Endothelial cell of umbilical vein (primary cell): ENCODE measurements at regions of chr11 and their contacts with region 1.

Region 1: DNA sequence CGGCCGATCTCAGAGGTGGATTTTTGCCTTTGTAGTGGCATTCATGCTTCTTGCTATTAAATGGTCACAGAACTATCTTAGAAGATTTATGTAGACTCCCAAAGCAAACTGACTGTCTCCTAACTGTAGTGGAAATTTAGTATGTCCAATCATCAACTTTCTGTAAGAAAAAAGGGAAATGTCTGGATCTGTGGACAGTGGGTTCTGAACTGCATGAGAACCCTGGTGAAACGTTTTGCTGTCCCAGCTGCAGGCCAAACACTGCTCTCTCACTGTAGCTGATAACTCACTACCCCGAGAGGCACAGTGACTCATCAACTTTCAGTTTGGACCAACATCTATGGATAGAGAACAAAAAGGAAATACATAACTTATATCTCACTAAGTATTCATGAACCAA is 387.1 kb downstream of the SOX6 start:
- DNase-seq: peak; percentile 85
- H3K4me3 ChIP-seq: no peak overlapping the region
- H3K27ac ChIP-seq: peak overlapping the region; percentile 93
- H3K4me1 ChIP-seq: peaks cover 24% of the 10 kb centered on the region
- H3K27me3 ChIP-seq: no peaks in the 10 kb centered on the region
- CTCF ChIP-seq: no peak
- POLR2A ChIP-seq: no peak

Region 2: DNA sequence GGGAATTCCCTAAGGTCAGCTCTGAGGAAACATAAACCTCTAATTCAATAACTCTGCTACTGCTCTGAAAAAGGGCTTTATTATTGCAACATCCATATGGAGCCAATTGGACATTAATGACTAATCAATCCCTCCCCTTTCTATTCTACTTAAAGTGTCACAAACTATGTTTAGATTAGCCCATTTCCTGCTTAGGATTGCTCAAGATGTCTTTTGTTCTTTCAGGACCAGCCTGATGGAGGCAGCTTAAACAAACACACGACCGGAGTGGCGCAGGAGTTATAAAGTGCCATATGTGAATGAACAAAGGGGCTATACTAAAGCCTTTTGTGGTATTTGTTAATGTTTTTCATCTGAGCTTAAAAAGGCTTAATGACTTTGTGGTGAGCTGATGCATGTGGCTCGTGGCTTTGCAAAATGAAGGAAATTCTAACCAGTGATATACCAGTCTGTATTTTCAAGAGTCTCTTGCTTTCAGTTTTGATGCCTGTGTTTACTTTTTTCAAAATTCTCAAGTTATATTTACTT is 32.7 kb after region 1 on chr11:
- CTCF ChIA-PET with region 1: interaction called, 3 read pairs
- POLR2A ChIA-PET with region 1: no interaction called
- dilution Hi-C with region 1: no loop called
- intact Hi-C with region 1: loop called (anchors 1 kb)
- DNase-seq: peak; percentile 87
- H3K4me3 ChIP-seq: no peak overlapping the region
- H3K27ac ChIP-seq: peak overlapping the region; percentile 62
- H3K4me1 ChIP-seq: peaks cover 22% of the 10 kb centered on the region
- H3K27me3 ChIP-seq: peaks cover 0 to 2% of the 10 kb centered on the region in 2 experiments
- CTCF ChIP-seq: no peak
- POLR2A ChIP-seq: no peak